ENCODE measurements at regions of chr6 and their contacts with region 1.

Region 1: DNA sequence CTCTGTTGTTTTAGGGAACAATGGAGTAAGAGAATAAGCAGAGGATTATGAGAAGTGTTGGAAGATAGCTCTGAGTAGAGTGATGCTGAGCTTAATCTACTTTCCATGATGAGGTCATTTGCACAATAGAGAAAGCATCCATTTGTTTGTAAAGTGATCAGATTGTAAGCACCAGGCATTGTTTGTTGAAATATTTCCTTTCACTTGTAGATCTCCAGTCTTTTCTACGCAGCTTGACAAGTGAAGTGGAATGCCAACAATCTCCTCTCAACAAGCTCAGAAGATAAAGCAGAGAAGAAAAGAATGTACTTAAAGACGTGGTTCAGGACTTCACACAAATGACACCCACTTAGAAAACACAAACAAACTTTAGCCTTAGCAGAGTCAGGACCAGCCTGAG is 80.1 kb upstream of the MARCKS start:
- DNase-seq: no peak
- CTCF ChIP-seq: no peak

Region 2: GRCh38 chr6:113758826-113759574 is 18.0 kb before region 1 on chr6:
- CTCF ChIA-PET with region 1: interaction called, 10 read pairs
- POLR2A ChIA-PET with region 1: interaction called, 6 read pairs
- DNase-seq: no peak
- CTCF ChIP-seq: no peak

Measured in GM10248 (cell line).